MCF 10A (cell line): ENCODE measurements at regions of chr5 and their contacts with region 1.

Region 1: GRCh38 chr5:100311807-100312206 is 223.4 kb upstream of the FAM174A start:
- DNase-seq: no peak
- H3K4me3 Mint-ChIP-seq: no peak overlapping the region
- H3K27ac Mint-ChIP-seq: no peak overlapping the region
- H3K4me1 Mint-ChIP-seq: no peaks in the 10 kb centered on the region
- H3K27me3 Mint-ChIP-seq: no peaks in the 10 kb centered on the region
- CTCF ChIP-seq: peak; percentile 18

Region 2: DNA sequence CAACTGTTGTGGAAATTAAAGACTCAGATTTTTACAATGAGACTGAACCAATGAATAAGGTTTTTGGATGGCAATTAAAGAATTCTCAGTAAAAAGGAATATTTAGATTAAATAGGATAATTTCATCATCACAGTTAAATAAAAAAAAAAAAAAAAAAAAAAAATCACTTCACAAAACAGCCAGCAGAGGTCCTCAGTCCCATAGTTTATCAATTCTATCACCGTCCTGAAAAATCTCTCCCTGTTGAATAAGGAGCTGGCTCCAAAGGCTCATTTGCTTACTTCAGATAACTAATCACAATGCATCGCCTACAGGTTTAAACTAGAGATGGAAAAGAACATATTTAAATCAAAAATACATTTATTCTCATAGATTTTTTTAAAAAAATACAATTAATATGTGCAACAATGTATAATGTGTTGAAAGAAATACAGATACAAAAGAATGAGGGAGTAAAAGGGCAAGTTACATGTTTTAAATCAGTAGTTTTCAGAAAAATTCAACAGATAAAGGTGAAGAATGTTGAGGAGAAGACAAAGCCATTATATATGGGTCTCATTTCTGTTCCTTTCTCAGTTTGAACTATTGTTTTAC is 1207.2 kb before region 1 on chr5:
- CTCF ChIA-PET with region 1: interaction called, 4 read pairs
- POLR2A ChIA-PET with region 1: no interaction called
- intact Hi-C with region 1: loop called (anchors 5 kb)
- DNase-seq: peak; percentile 45
- H3K4me3 Mint-ChIP-seq: no peak overlapping the region
- H3K27ac Mint-ChIP-seq: no peak overlapping the region
- H3K4me1 Mint-ChIP-seq: no peaks in the 10 kb centered on the region
- H3K27me3 Mint-ChIP-seq: peaks cover 72% of the 10 kb centered on the region
- CTCF ChIP-seq: peak; percentile 47

Region 3: DNA sequence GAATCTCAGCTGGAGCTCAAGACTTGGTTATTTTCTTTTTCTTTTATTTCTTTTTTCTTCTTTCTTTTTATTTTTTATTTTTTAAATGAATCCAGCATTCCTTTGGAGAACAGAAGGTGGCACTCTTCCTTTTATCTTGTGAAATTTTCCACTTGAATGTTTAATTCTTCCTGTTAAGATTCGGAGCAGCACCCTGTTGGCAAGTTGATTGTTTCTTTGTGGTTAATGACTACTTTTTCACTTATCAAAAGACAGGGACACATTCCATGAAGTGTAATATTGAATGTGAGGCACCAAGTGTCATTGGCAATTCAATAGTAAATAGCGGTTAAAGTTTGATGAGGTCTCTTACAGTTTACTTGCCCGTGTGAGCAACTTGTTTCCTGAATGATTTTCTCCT is 1142.5 kb before region 1 on chr5:
- CTCF ChIA-PET with region 1: no interaction called
- POLR2A ChIA-PET with region 1: no interaction called
- intact Hi-C with region 1: loop called (anchors 5 kb)
- DNase-seq: peak; percentile 9
- H3K4me3 Mint-ChIP-seq: no peak overlapping the region
- H3K27ac Mint-ChIP-seq: no peak overlapping the region
- H3K4me1 Mint-ChIP-seq: no peaks in the 10 kb centered on the region
- H3K27me3 Mint-ChIP-seq: peaks cover 43% of the 10 kb centered on the region
- CTCF ChIP-seq: peak; percentile 22

Region 4: DNA sequence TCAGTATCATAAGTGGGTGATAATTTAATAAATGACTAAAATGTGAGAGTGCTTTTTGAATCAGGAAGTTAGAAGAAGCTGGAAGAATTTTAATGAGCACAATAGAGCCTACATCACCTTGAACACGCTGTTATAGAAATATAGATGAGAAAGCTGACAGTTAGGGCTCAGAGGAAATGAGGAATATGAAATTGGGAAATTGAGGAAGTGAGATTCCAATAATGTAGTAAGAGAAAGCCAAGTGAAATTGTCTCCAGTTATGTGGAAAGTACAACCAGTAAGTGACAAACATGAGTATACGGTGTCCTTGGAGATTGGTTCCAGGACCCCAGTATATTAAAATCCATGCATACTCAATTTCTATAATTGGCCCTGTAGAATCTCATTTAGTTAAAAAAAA is 12.5 kb before region 1 on chr5:
- CTCF ChIA-PET with region 1: no interaction called
- POLR2A ChIA-PET with region 1: no interaction called
- intact Hi-C with region 1: no loop called
- DNase-seq: no peak
- H3K4me3 Mint-ChIP-seq: no peak overlapping the region
- H3K27ac Mint-ChIP-seq: peak overlapping the region; percentile 60
- H3K4me1 Mint-ChIP-seq: peaks cover 9% of the 10 kb centered on the region
- H3K27me3 Mint-ChIP-seq: no peaks in the 10 kb centered on the region
- CTCF ChIP-seq: no peak

Region 5: DNA sequence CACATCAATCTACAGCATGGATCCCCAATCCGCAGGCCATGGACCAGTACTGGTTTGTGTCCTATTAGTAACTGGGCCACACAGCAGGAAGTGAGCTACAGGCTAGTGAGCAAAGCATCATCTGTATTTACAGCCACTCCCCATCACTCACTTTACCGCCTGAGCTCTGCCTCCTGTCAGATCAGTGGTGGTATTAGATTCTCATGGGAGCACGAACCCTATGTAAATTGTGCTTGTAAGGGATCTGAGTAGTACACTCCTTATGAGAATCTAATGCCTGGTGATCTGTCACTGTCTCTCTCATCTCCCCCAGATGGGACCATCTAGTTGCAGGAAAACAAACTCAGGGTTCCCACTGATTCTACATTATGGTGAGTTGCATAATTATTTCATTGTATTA is 10.7 kb after region 1 on chr5:
- CTCF ChIA-PET with region 1: no interaction called
- POLR2A ChIA-PET with region 1: no interaction called
- intact Hi-C with region 1: no loop called
- DNase-seq: no peak
- H3K4me3 Mint-ChIP-seq: no peak overlapping the region
- H3K27ac Mint-ChIP-seq: no peak overlapping the region
- H3K4me1 Mint-ChIP-seq: peaks cover 12% of the 10 kb centered on the region
- H3K27me3 Mint-ChIP-seq: no peaks in the 10 kb centered on the region
- CTCF ChIP-seq: no peak

Region 6: DNA sequence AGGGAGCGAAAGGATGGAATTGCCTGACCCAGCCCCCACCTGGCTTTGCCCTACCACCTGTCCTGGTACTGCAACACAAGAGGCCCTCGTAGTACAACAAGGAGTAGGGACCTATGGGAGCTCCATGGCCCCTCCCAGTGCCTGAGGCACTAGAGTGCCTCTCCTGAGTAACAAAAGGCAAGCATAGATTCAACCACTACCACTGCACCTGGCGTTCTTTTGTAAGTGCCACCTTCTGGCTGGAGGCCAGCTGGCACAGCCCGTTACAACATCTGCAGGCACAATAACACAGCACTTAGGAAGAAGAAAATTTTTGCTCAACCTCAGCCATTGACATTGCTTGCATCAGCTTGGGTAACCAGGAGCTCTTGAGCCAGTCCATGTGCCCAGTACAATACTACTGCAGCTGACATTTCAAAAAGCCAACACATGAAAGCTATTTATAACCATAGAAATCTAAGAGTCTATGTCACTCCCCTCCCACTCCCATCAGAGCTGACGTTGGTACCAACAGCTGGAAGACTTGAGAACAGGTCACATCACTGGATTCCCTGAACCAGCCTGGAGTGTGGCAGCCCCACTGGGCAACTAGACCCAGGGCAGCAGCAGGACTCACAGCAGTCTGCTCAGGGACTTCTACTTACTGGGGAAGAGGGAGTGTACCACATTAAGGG is 205.6 kb after region 1 on chr5:
- CTCF ChIA-PET with region 1: no interaction called
- POLR2A ChIA-PET with region 1: no interaction called
- intact Hi-C with region 1: no loop called
- DNase-seq: peak; percentile 95
- H3K4me3 Mint-ChIP-seq: peak overlapping the region; percentile 19
- H3K27ac Mint-ChIP-seq: peak overlapping the region; percentile 61
- H3K4me1 Mint-ChIP-seq: peaks cover 24% of the 10 kb centered on the region
- H3K27me3 Mint-ChIP-seq: no peaks in the 10 kb centered on the region
- CTCF ChIP-seq: no peak